ENCODE measurements at regions of chr2 and their contacts with region 1.

Region 1: DNA sequence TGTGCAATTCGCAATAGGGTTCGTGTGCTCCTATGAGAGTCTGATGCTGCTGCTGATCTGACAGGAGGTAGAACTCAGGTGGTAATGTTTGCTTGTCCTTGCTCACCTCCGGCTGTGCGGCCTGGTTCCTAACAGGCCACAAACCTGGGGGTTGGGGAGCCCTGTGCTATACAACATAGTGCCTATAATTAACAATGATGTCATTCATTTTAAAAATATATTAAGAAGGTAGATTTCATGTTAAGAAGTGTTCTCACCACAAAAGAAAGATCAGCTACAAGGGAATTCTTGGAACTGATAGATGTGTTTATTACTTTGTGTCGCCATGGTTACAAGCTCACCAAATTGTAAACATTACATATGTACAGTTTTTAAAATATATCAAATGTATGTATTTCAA is 200.5 kb downstream of the GRB14 start:
- DNase-seq: no peak
- ATAC-seq: no peak

Region 2: DNA sequence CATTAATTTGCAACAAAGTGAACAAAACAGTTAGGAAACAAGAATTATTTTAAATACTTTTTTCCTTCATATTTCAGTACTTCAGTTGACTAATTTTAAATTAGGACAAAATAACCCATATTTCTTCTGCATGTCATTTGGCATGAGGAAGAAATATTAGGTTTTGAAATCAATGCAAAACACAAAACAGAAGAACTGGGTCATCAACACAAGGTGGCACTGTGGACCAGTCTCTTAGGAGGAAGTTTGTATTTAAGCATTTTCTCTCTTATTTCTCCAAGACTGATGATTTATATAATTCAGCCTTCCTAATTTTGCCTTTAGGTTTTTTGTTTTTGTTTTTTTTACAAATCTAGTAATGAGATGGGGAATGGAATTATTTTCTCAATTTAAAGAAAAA is 1229.4 kb before region 1 on chr2:
- intact Hi-C with region 1: loop called (anchors 10 kb)
- DNase-seq: no peak
- ATAC-seq: no peak

Region 3: DNA sequence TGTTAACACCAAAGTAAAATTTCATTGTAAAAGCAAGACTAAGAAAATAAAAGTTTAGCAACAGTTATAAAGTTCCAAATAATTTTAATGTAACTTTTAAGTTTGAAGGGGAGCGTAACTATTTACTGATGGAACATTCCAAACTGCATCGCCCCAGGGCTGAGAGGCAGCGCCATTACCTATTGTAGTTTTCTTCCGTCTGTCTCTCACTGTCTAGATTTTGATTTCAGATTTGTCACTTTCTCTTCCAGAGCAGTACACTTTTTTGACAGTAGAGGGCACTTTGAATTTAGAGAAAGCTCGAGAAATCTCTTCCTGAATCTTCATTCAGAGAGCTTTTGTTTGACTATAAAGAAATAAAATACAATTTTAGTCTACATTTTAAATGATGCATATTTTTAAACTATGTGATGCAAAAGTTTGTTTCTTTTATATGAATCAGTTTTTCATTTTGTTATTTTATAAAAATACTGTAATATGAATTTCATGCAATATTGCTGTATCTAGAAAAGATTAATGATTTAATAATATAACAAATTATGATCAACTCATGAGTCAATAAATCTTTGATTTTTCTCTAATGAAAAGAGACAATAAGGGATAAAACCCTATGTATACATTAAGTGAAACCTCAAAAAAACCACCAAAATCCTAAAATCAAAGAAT is 1074.7 kb before region 1 on chr2:
- intact Hi-C with region 1: loop called (anchors 10 kb)
- DNase-seq: no peak
- ATAC-seq: no peak